GM12878 (cell line): ENCODE measurements at regions of chr2 and their contacts with region 1.

Region 1: DNA sequence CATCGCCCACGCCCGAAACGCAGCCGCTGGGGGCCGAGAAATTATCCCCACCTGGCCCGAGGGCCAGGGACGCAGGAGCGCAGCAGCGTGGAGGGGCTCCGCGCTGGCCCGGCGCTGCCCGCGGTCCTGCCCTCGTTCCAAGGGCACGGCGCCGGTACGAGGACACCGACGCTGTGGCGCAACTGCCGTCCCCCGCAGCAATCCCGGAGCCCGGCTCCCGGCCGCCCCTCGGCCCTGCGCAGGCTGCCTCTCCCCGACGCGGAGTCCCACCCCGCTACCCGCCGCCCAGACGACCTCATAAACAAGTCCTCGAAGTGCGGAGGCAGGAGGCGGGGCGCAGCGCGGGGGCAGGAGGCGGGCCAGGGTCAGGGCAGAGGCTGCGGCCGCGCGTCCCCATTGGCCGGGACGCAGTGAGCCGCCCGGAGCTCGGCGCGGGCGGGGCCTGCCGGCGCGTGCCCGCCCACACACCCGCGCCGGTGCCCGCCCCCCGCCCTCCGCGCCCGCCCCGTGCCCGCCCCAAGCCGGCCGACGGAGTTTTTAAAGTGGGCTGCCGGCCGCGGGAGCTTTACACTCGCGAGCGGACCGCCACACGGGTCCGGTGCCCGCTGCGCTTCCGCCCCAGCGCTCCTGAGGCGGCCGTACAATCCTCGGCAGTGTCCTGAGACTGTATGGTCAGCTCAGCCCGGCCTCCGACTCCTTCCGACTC is at the start of gene EPAS1:
- DNase-seq: peak; percentile 8
- ATAC-seq: peak; percentile 88
- H3K4me3 ChIP-seq: peak within 1 kb of the TSS; percentile 76
- H3K27ac ChIP-seq: no peak within 1 kb of the TSS
- H3K4me1 ChIP-seq: peaks cover 8% of the 10 kb centered on the region
- H3K27me3 ChIP-seq: peaks cover 5 to 30% of the 10 kb centered on the region in 2 experiments
- CTCF ChIP-seq: no peak
- EP300 ChIP-seq: no peak
- POLR2A ChIP-seq: no peak; the same call in 1 of the 2 replicates
- RAD21 ChIP-seq: no peak
- polyA plus RNA-seq, gene EPAS1: 0.11 TPM in 1 of 2 experiments, not detected in the other

Region 2: DNA sequence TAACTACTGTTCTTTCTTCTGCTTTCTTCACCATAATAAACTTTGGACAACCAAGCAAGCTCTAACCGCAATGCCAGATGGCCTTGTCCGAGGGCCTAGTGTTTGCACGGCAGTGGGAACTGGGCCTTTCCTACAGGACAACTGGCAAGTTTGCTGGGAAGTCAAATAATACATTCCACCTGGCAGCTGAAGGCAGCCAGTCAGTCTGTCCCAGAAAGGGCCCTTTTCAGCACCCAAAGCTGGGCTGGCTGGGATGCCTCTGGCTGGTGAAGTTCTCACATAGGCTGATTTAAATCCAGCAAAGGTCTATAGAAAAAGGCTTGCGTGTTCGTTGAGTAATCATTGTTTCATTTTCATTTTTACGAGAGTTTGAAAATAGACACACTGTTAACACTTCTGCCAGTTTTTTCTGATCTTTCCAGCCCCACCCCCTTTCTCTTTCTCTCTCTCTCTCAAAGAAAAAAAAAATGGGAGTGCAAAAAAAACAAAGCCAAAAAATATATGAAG is 109.8 kb before region 1 on chr2:
- CTCF ChIA-PET with region 1: interaction called, 4 read pairs
- POLR2A ChIA-PET with region 1: no interaction called
- RAD21 ChIA-PET with region 1: interaction called, 4 read pairs
- SMC1A ChIA-PET with region 1: interaction called, 3 read pairs
- in situ Hi-C with region 1: no loop called
- intact Hi-C with region 1: loop called (anchors 5 kb)
- DNase-seq: peak; percentile 70
- ATAC-seq: peak; percentile 99
- H3K4me3 ChIP-seq: peak overlapping the region; percentile 41
- H3K27ac ChIP-seq: peak overlapping the region; percentile 66
- H3K4me1 ChIP-seq: peaks cover 5% of the 10 kb centered on the region
- H3K27me3 ChIP-seq: no peaks in the 10 kb centered on the region
- CTCF ChIP-seq: no peak
- EP300 ChIP-seq: peak in 1 of 2 experiments; percentile 20; a peak in 1 of 4 replicates
- POLR2A ChIP-seq: no peak
- RAD21 ChIP-seq: no peak

Region 3: GRCh38 chr2:46241344-46241743 is 55.6 kb before region 1 on chr2:
- CTCF ChIA-PET with region 1: interaction called, 6 read pairs
- POLR2A ChIA-PET with region 1: no interaction called
- RAD21 ChIA-PET with region 1: interaction called, 4 read pairs
- SMC1A ChIA-PET with region 1: interaction called, 4 read pairs
- in situ Hi-C with region 1: no loop called
- intact Hi-C with region 1: loop called (anchors 5 kb)
- DNase-seq: no peak
- ATAC-seq: peak; percentile 74
- H3K4me3 ChIP-seq: no peak overlapping the region
- H3K27ac ChIP-seq: no peak overlapping the region
- H3K4me1 ChIP-seq: peaks cover 7% of the 10 kb centered on the region
- H3K27me3 ChIP-seq: no peaks in the 10 kb centered on the region
- CTCF ChIP-seq: no peak
- EP300 ChIP-seq: no peak
- POLR2A ChIP-seq: no peak
- RAD21 ChIP-seq: no peak